ENCODE measurements at regions of chr3 and their contacts with region 1.

Region 1: GRCh38 chr3:138332472-138333076 is 2.9 kb upstream of the NME9 start:
- DNase-seq: no peak
- ATAC-seq: no peak

Region 2: GRCh38 chr3:138032567-138032966 is 300.0 kb before region 1 on chr3:
- intact Hi-C with region 1: no loop called
- DNase-seq: no peak
- ATAC-seq: no peak

Region 3: GRCh38 chr3:138060792-138061191 is 271.8 kb before region 1 on chr3:
- intact Hi-C with region 1: no loop called
- DNase-seq: no peak
- ATAC-seq: no peak

Region 4: DNA sequence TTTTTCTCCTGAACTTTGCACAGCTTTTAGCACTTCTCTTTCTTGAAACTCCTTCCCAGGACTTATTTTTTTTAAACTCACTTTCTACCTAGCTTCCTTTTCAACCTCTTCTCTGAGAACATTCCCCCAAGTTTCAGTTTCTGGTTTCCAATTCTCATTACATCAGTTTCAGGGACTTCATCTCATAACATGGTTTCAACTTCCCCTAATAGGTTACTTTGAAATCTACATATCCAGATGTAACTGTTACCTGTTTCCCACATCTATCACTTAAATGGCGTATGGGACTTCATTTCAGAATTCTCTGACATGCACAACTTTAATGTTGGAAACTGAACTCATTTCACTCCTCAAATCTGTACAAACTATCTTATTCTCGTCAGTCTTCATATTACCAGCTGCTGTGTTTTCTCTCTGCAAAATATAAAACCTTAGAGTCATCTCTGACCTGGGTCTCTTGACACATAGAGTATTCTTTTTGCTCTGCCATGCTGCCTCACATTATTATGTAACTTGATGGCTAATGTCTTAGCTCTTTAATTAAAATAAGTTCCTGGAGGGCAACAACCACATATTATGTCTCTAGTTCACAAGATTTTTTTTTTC is 61.3 kb before region 1 on chr3:
- intact Hi-C with region 1: no loop called
- DNase-seq: no peak
- ATAC-seq: no peak

Region 5: GRCh38 chr3:138417559-138417982 is 85.0 kb after region 1 on chr3:
- intact Hi-C with region 1: loop called (anchors 5 kb)
- DNase-seq: peak; percentile 83
- ATAC-seq: peak; percentile 89

Measured in Right ventricle myocardium superior (tissue), 1 donor.